ENCODE measurements at regions of chrX and their contacts with region 1.

Region 1: DNA sequence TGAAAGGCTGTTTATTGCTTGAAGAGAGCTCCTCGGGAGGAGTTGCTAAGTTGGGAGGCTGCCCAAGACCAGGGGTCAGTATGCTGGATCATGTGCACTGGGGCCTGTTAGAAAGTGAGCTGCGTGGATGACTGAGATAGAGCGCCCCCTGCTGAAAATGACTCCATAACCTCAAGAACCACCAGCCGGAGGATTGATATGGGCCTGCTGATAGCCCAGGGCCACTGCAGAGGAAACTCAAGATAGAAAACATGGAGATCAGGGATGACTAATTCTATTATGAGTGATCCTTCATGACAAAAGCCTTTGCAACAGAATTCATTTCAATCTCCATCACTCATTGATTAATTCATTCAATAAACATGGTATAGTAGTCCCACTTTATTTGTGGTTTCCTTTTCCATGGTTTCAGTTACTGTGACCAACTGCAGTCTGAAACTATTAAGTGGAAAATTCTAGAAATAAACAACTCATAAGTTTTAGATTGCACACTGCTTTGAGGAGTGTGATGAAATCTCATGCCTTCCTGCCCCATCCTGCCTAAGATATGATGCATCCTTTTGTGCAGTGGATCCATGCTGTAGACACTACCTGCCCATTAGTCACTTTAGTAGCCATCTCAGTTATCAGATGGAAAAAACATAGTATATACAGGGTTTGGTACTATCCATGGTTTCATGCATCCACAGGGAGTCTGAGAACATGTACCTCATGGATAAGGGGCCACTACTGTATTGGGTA is 126.7 kb upstream of the MBNL3 start:
- DNase-seq: peak; percentile 34
- H3K4me3 ChIP-seq: no peak overlapping the region
- H3K27ac ChIP-seq: no peak overlapping the region
- H3K4me1 ChIP-seq: no peaks in the 10 kb centered on the region
- H3K27me3 ChIP-seq: no peaks in the 10 kb centered on the region
- CTCF ChIP-seq: peak; percentile 23 to 41
- POLR2A ChIP-seq: no peak

Region 2: GRCh38 chrX:131830400-131831184 is 785.0 kb before region 1 on chrX:
- CTCF ChIA-PET with region 1: no interaction called
- POLR2A ChIA-PET with region 1: no interaction called
- dilution Hi-C with region 1: no loop called
- intact Hi-C with region 1: loop called (anchors 5 kb)
- DNase-seq: peak; percentile 82
- H3K4me3 ChIP-seq: peak overlapping the region in 1 of 3 experiments; percentile 10
- H3K27ac ChIP-seq: peak overlapping the region; percentile 83
- H3K4me1 ChIP-seq: peaks cover 10% of the 10 kb centered on the region
- H3K27me3 ChIP-seq: no peaks in the 10 kb centered on the region
- CTCF ChIP-seq: peak; percentile 38 to 58
- POLR2A ChIP-seq: no peak

Region 3: DNA sequence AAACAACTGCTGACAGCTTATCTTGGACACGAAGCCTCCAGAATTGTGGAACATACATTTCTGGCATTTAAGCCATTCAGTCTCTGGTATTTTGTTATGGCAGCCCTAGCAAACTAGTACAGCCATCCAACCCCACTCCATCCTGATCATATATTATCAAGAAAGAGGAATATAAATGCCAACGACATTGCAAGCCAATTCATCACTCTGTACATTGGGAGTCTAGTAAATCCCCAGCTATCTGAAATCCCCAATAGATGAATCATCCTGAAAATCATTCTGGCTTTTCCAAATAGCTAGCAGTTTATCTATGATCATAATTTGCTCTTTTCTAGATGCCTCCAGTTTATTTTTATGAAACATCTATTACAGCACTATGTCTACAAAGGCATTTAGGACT is 528.9 kb before region 1 on chrX:
- CTCF ChIA-PET with region 1: interaction called, 11 read pairs
- POLR2A ChIA-PET with region 1: no interaction called
- dilution Hi-C with region 1: no loop called
- intact Hi-C with region 1: loop called (anchors 5 kb)
- DNase-seq: peak; percentile 47
- H3K4me3 ChIP-seq: no peak overlapping the region
- H3K27ac ChIP-seq: peak overlapping the region; percentile 11
- H3K4me1 ChIP-seq: peaks cover 14% of the 10 kb centered on the region
- H3K27me3 ChIP-seq: no peaks in the 10 kb centered on the region
- CTCF ChIP-seq: no peak
- POLR2A ChIP-seq: no peak

Region 4: DNA sequence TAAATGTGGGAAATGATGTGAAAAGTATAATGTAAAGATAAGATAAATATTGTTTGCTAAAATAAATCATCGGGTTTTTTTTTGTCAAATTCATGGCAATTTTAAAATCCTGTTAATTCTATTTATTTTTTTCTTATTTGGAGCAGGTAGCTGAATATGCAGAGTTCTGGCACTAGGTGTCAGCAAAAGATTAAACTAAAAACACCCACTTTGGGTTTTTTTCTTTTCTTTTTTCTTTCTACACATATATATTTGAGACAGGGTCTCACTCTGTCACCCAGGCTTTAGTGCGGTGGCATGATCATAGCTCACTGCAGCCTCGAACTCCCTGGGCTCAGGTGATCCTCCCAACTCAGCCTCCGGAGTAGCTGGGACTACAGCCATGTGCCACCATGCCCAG is 389.4 kb before region 1 on chrX:
- CTCF ChIA-PET with region 1: interaction called, 40 read pairs
- POLR2A ChIA-PET with region 1: no interaction called
- dilution Hi-C with region 1: no loop called
- intact Hi-C with region 1: loop called (anchors 1 kb)
- DNase-seq: no peak
- H3K4me3 ChIP-seq: no peak overlapping the region
- H3K27ac ChIP-seq: no peak overlapping the region
- H3K4me1 ChIP-seq: no peaks in the 10 kb centered on the region
- H3K27me3 ChIP-seq: no peaks in the 10 kb centered on the region
- CTCF ChIP-seq: peak in 1 of 2 donors; percentile 14
- POLR2A ChIP-seq: no peak

Region 5: GRCh38 chrX:132292793-132293192 is 322.8 kb before region 1 on chrX:
- CTCF ChIA-PET with region 1: interaction called, 77 read pairs
- POLR2A ChIA-PET with region 1: no interaction called
- dilution Hi-C with region 1: no loop called
- intact Hi-C with region 1: loop called (anchors 1 kb)
- DNase-seq: peak; percentile 35
- H3K4me3 ChIP-seq: no peak overlapping the region
- H3K27ac ChIP-seq: no peak overlapping the region
- H3K4me1 ChIP-seq: no peaks in the 10 kb centered on the region
- H3K27me3 ChIP-seq: peaks cover 0 to 2% of the 10 kb centered on the region in 2 experiments
- CTCF ChIP-seq: peak; percentile 29 to 30
- POLR2A ChIP-seq: no peak

Region 6: GRCh38 chrX:132488819-132489577 is 126.6 kb before region 1 on chrX and contains the start of gene MBNL3:
- CTCF ChIA-PET with region 1: no interaction called
- POLR2A ChIA-PET with region 1: no interaction called
- dilution Hi-C with region 1: no loop called
- intact Hi-C with region 1: loop called (anchors 10 kb)
- DNase-seq: peak; percentile 43
- H3K4me3 ChIP-seq: peak within 1 kb of the TSS; percentile 53 to 81 (median 55)
- H3K27ac ChIP-seq: peak within 1 kb of the TSS; percentile 50
- H3K4me1 ChIP-seq: peaks cover 3% of the 10 kb centered on the region
- H3K27me3 ChIP-seq: peaks cover 0 to 7% of the 10 kb centered on the region in 2 experiments
- CTCF ChIP-seq: no peak
- POLR2A ChIP-seq: no peak
- total RNA-seq, gene MBNL3: 4.9 and 5.6 TPM in 2 replicates

Region 7: GRCh38 chrX:132631579-132632232 is 16.1 kb after region 1 on chrX:
- CTCF ChIA-PET with region 1: interaction called, 7 read pairs
- POLR2A ChIA-PET with region 1: no interaction called
- dilution Hi-C with region 1: no loop called
- intact Hi-C with region 1: loop called (anchors 1 kb)
- DNase-seq: peak; percentile 33
- H3K4me3 ChIP-seq: no peak overlapping the region
- H3K27ac ChIP-seq: no peak overlapping the region
- H3K4me1 ChIP-seq: no peaks in the 10 kb centered on the region
- H3K27me3 ChIP-seq: no peaks in the 10 kb centered on the region
- CTCF ChIP-seq: peak; percentile 27 to 30
- POLR2A ChIP-seq: no peak

Region 8: DNA sequence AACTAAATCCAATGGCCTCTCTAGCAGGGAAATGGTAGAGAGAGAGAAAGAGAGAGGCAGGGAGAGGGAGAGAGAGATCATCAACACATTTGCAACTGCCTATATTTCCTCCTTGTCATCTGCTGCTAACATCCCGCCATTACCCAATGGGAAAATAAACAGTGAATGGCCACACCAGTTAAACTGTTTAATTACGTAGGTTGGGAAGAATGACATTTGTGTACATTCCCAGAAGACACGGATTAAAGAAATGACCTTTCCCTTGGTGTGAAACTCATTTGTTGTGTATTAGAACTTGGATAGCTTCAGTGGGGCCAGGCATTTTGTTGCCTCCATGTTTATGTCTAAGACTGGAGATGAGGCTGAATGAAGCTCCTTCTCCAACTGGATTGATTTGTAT is 895.5 kb after region 1 on chrX:
- CTCF ChIA-PET with region 1: no interaction called
- POLR2A ChIA-PET with region 1: no interaction called
- dilution Hi-C with region 1: no loop called
- intact Hi-C with region 1: no loop called
- DNase-seq: no peak
- H3K4me3 ChIP-seq: no peak overlapping the region
- H3K27ac ChIP-seq: no peak overlapping the region
- H3K4me1 ChIP-seq: no peaks in the 10 kb centered on the region
- H3K27me3 ChIP-seq: no peaks in the 10 kb centered on the region
- CTCF ChIP-seq: no peak
- POLR2A ChIP-seq: no peak